A549 (cell line): ENCODE measurements at regions of chr5 and their contacts with region 1.

Region 1: DNA sequence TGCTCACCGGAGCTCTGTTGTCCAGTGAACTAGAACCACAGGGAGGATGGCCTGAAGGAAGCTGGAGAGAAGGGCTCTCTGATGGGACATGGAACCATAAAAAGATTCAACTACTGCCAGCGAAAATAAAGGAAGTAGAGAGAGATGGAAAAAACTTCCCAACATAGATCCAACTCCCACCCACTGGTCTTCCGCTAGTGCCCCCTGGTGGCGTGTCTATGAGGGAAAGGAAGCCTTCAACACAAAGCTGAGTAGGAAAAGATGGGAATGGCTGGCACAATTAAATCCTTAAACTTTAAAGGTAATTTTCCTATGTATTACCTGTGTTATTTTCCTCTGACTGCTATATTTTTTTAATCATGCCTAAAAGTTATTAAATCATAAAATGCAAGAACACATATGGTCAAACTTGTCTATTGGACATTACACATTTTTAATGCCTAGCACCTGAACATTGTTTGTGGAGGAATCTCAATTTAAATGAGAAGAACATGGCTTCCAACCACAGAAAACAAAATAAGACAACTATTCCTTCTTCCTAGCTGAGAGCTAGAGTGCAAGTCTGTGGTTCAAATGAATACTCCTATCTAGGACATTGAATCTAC is 51.5 kb downstream of the CEP120 start:
- DNase-seq: peak; percentile 7 to 33
- ATAC-seq: peak; percentile 43 to 65; a peak in 4 of 6 replicates
- H3K4me3 ChIP-seq: no peak overlapping the region
- H3K27ac ChIP-seq: no peak overlapping the region
- H3K4me1 ChIP-seq: no peaks in the 10 kb centered on the region
- CTCF ChIP-seq: peak; percentile 44; the same call in 2 of the 3 replicates
- EP300 ChIP-seq: no peak
- POLR2A ChIP-seq: no peak
- RAD21 ChIP-seq: peak in 1 of 2 experiments; percentile 24; a peak in 1 of 5 replicates

Region 2: DNA sequence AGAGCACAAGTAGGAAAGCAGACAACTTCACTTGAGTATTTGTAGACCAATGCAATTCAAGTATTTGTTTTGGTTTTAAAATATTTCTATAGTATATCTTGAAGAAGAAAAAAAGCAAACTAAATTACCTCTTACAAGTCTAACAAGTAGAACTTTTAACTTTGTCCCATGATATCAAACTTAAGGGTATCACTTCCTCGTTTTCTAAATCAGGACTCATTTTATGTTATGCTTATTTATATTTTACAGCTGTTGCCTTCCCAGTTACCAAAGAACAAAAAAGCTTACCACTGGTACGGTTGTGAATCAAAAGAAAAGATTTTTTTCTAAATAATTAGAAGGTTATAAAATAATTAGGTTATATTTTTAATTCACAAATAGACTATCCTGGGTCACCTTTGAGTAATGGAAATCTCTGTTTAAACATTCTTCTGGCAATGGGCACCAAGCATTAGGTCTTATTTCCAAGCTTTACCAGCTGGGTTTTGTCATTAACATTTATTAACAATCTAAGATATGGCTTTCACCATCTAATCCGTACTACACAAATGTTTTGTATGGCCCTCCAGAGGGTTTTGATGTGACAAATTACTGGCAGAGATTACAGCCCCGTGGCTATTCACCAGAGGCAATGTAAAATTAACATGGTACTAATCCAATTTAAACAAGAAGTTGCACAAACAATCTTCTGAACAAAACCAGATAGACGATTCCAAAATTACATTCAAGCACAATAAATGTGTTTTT is 12.1 kb before region 1 on chr5:
- CTCF ChIA-PET with region 1: interaction called, 12 read pairs
- POLR2A ChIA-PET with region 1: no interaction called
- DNase-seq: no peak
- ATAC-seq: no peak
- H3K4me3 ChIP-seq: no peak overlapping the region
- H3K27ac ChIP-seq: no peak overlapping the region
- H3K4me1 ChIP-seq: no peaks in the 10 kb centered on the region
- CTCF ChIP-seq: no peak
- EP300 ChIP-seq: no peak
- POLR2A ChIP-seq: no peak
- RAD21 ChIP-seq: no peak